ENCODE measurements at regions of chr17 and their contacts with region 1.

Region 1: GRCh38 chr17:38557836-38558727 is 47.7 kb downstream of the SRCIN1 start:
- DNase-seq: peak; percentile 91

Region 2: GRCh38 chr17:38536661-38537060 is 21.4 kb before region 1 on chr17:
- CTCF ChIA-PET with region 1: interaction called, 11 read pairs
- POLR2A ChIA-PET with region 1: interaction called, 6 read pairs
- DNase-seq: no peak

Region 3: GRCh38 chr17:38584350-38584925 is 26.4 kb after region 1 on chr17:
- CTCF ChIA-PET with region 1: interaction called, 46 read pairs
- POLR2A ChIA-PET with region 1: interaction called, 15 read pairs
- DNase-seq: peak; percentile 73

Region 4: DNA sequence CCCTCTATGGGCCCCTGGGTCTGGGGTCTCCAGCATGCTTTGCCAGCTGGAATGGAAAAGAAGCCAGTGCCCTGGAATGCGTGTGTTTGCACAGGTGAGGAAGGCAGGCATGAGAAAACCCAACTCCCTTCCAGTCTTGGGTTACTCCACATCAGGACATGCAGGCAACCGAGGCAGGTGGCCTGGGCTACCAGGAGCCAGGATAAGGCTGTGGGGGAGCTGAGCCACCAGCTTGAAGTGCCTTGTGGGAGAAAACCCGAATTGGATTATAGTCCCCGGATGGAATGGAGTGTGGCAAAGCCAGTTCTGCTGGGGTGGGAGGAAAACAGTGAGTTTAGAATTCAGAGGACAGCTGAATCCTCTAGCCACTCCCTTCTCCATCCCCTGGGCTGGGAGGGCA is 40.5 kb after region 1 on chr17:
- CTCF ChIA-PET with region 1: interaction called, 19 read pairs
- POLR2A ChIA-PET with region 1: interaction called, 3 read pairs
- DNase-seq: peak; percentile 75

Region 5: DNA sequence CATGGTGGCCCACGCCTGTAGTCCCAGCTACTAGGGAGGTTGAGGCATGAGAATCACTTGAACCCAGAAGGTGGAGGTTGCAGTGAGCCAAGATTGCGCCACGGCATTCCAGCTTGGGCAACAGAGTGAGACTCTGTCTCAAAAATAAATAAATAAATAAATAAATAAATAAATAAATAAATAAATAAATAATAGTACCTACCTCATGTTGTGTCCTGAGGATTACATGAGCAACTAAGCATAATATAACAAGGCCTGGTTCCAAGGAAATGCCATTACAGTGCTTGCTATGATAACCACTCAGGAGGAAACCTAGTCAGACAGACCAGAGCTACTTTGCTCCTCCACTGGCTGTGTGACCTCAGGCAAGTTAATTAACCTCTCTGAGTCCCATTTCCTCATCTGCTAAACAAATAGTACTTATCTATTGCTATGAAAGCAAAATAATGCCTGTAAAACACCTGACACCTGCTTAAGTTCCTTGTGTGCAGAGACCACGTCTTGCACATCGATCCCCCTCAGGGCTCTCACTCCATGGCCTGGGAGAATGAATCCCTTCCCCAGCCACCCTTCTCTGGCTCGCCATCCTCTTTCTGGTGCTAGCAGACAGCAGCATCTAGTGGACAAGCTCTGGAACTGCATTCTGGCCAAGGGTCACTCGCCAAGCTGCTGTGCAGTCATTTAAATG is 109.2 kb after region 1 on chr17:
- CTCF ChIA-PET with region 1: interaction called, 25 read pairs
- POLR2A ChIA-PET with region 1: interaction called, 7 read pairs
- DNase-seq: peak; percentile 75